CD4-positive, alpha-beta memory T cell (primary cell): ENCODE measurements at regions of chr18 and their contacts with region 1.

Region 1: GRCh38 chr18:75364512-75365253 is 62.8 kb downstream of the SMIM21 start:
- DNase-seq: no peak
- H3K4me3 ChIP-seq: no peak overlapping the region
- H3K4me3 Mint-ChIP-seq: no peak overlapping the region
- H3K27ac ChIP-seq: no peak overlapping the region
- H3K27ac Mint-ChIP-seq: no peak overlapping the region
- H3K4me1 ChIP-seq: no peaks in the 10 kb centered on the region
- H3K4me1 Mint-ChIP-seq: peaks cover 0 to 1% (median under 1%) of the 10 kb centered on the region in 4 donors
- H3K27me3 ChIP-seq: no peaks in the 10 kb centered on the region
- H3K27me3 Mint-ChIP-seq: peaks cover under 1 to 1% of the 10 kb centered on the region in 2 donors

Region 2: GRCh38 chr18:75161256-75162028 is 203.2 kb before region 1 on chr18:
- CTCF ChIA-PET with region 1: no interaction called
- POLR2A ChIA-PET with region 1: no interaction called
- intact Hi-C with region 1: loop called (anchors 10 kb)
- DNase-seq: peak in 4 of 5 donors; percentile 10 to 26 (median 15)
- H3K4me3 ChIP-seq: peak overlapping the region; percentile 5 to 60
- H3K4me3 Mint-ChIP-seq: peak overlapping the region; percentile 85 to 91 (median 88)
- H3K27ac ChIP-seq: no peak overlapping the region
- H3K27ac Mint-ChIP-seq: peak overlapping the region in 6 of 7 donors; percentile 49 to 74 (median 70)
- H3K4me1 ChIP-seq: peaks cover 12% of the 10 kb centered on the region
- H3K4me1 Mint-ChIP-seq: peaks cover 8 to 9% (median 9%) of the 10 kb centered on the region in 4 donors
- H3K27me3 ChIP-seq: peaks cover 3% of the 10 kb centered on the region
- H3K27me3 Mint-ChIP-seq: peaks cover 1 to 4% of the 10 kb centered on the region in 2 donors

Region 3: DNA sequence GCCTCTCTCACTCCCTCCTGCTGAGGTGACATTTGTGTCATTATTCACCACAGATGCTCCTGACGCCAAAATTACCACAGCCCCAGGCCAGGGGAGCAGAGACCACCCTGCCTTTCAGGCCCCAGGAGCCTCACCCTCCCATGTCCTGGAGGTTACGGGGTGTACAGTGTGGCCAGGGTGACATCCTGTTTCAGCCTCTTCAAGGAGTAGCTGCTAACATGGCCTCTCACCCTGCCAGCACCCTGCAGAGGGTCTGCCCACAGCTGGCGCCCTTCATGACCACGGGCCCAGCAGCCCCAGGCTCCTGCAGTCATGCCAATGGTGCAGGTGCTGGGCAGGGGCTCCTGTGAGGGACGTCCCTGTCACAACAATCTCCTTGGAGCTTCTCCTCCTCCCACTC is 29.8 kb before region 1 on chr18:
- CTCF ChIA-PET with region 1: no interaction called
- POLR2A ChIA-PET with region 1: no interaction called
- intact Hi-C with region 1: no loop called
- DNase-seq: no peak
- H3K4me3 ChIP-seq: no peak overlapping the region
- H3K4me3 Mint-ChIP-seq: no peak overlapping the region
- H3K27ac ChIP-seq: no peak overlapping the region
- H3K27ac Mint-ChIP-seq: no peak overlapping the region
- H3K4me1 ChIP-seq: no peaks in the 10 kb centered on the region
- H3K4me1 Mint-ChIP-seq: no peaks in the 10 kb centered on the region
- H3K27me3 ChIP-seq: no peaks in the 10 kb centered on the region
- H3K27me3 Mint-ChIP-seq: peaks cover 0 to 1% of the 10 kb centered on the region in 2 donors